Activated CD8-positive, alpha-beta memory T cell treated with anti-CD3 and anti-CD28 coated beads, Interleukin-2, amount 10 ng/mL, durations not matched to agents 7 days and 5 days (primary cell): ENCODE measurements at regions of chr14 and their contacts with region 1.

Region 1: DNA sequence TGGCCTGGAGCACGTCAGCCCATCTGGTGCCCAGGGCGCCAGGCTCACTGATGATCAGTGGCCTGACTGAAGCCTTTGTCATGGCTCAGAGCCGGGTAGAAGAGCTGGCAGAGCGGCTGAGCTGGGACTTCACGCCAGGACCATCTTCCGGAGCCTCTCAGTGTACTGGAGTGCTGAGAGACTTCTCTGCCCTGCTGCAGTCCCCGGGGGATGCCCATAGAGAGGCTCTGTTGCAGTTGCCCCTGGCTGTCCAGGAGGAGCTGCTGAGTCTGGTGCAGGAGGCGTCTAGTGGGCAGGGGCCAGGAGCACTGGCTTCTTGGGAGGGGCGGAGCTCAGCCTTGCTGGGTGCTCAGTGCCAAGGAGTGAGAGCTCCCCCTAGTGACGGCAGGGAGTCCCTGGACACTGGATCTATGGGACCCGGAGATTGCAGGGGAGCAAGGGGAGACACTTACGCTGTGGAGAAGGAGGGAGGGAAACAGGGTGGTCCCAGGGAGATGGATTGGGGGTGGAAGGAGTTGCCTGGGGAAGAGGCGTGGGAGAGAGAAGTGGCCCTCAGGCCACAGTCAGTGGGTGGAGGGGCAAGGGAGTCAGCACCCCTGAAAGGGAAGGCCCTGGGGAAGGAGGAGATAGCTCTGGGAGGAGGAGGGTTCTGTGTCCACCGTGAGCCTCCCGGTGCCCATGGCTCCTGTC is 2.0 kb downstream of the KHNYN start:
- DNase-seq: peak; percentile 95
- ATAC-seq: peak; percentile 62
- H3K4me3 Mint-ChIP-seq: peak overlapping the region; percentile 89
- H3K27ac Mint-ChIP-seq: peak overlapping the region; percentile 96
- H3K4me1 Mint-ChIP-seq: peaks cover 48% of the 10 kb centered on the region
- H3K27me3 Mint-ChIP-seq: no peaks in the 10 kb centered on the region

Region 2: GRCh38 chr14:24241829-24242443 is 189.8 kb before region 1 on chr14:
- CTCF ChIA-PET with region 1: interaction called, 30 read pairs
- DNase-seq: peak; percentile 96
- ATAC-seq: peak; percentile 83
- H3K4me3 Mint-ChIP-seq: peak overlapping the region; percentile 96
- H3K27ac Mint-ChIP-seq: peak overlapping the region; percentile 100
- H3K4me1 Mint-ChIP-seq: peaks cover 59% of the 10 kb centered on the region
- H3K27me3 Mint-ChIP-seq: no peaks in the 10 kb centered on the region

Region 3: DNA sequence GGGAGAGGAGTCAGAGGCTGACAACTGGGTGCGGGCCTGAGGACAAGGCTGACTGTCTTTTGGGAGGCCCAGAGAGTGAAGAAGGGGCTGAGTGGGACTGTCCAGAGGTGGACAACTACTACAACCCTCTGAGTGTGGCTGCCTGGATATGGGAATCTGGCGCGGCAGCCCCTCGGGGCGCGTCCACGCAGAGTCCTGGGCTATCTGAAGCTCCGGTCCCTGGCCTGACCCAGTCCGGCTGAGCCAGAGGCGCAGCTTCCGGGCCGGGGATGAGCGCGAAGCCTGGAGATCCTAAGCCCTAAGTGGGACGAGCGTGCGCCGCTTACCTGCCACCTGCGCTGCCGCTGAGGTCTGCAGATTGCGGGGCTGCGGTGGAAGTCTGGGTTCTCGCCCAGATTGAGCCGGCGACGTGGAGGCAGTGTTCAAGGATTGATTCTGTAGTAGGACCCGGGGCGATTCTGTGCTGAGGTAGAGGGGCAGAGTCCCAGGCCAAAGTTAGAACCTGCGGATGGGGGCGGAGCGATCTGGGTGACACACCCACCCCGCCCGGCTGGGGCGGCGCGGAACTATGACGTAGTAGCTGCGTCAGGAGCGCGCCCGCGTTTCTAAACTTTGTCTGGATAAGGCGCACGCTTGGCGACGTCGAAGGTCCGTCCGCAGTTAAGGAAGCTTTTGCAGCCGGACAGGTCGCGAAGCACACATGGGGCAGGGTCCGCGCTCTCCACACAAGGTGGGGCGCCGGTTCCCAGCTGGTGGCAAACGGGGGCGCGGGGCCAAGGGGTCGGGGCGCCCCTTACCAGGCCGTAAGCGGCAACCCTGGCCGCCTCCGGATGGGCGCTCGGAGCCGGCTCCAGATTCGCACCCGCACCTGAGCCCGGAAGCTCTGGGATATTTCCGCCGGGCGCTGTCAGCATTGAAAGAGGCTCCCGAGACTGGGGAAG is 132.2 kb before region 1 on chr14 and contains the starts of genes DHRS1 and NOP9:
- CTCF ChIA-PET with region 1: interaction called, 12 read pairs
- DNase-seq: peak; percentile 93
- ATAC-seq: peak; percentile 87
- H3K4me3 Mint-ChIP-seq: peak within 1 kb of the TSS; percentile 86
- H3K27ac Mint-ChIP-seq: peak within 1 kb of the TSS; percentile 89
- H3K4me1 Mint-ChIP-seq: peaks cover 55% of the 10 kb centered on the region
- H3K27me3 Mint-ChIP-seq: no peaks in the 10 kb centered on the region
- total RNA-seq, gene DHRS1: 14.2 to 26.5 TPM
- total RNA-seq, gene NOP9: 34.2 to 38.3 TPM

Region 4: GRCh38 chr14:24332268-24332993 is 99.3 kb before region 1 on chr14:
- CTCF ChIA-PET with region 1: interaction called, 854 read pairs
- DNase-seq: peak; percentile 92
- ATAC-seq: peak; percentile 66
- H3K4me3 Mint-ChIP-seq: peak overlapping the region; percentile 73
- H3K27ac Mint-ChIP-seq: peak overlapping the region; percentile 82
- H3K4me1 Mint-ChIP-seq: peaks cover 65% of the 10 kb centered on the region
- H3K27me3 Mint-ChIP-seq: peaks cover 38% of the 10 kb centered on the region

Region 5: DNA sequence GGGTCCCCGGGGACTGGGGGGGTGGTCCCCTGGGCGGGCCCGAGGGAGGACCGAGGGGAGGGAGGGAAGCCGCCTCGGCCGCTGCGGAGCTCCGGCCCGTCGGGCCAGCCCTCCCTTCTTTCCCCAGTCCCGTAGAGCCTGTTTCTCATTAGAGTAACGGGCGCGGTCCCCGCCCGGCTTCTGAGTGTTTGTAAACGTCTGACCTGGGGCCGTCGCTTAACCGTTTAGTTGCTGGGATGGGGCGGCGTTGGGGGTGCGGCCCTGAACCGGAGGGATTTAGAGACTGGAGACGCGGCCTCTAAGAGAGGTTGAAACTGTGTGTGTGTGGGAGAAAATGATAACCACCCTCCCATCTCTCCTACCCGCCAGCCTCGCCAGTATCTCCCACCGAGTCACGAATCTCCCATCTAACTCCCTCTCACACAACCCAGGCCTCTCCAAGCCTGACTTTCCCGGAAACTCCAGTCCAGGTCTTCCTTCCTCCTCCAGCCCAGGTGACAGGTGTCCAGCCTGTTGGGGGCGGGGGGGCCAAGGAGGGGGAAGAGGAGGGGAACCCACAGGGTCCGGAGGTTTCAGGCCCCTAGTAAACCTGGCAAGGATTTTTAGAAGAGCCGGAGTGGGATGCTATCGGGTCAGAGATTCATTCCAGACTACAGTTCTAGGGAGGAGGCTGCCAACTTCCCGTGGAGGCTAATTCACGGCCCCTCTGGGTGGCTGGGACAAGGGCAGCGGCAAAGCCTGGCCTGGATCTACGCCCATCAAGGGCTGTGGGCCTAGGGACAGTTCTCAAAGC is 64.8 kb before region 1 on chr14:
- CTCF ChIA-PET with region 1: interaction called, 41 read pairs
- DNase-seq: no peak
- ATAC-seq: no peak
- H3K4me3 Mint-ChIP-seq: no peak overlapping the region
- H3K27ac Mint-ChIP-seq: no peak overlapping the region
- H3K4me1 Mint-ChIP-seq: peaks cover 24% of the 10 kb centered on the region
- H3K27me3 Mint-ChIP-seq: peaks cover 61% of the 10 kb centered on the region

Region 6: GRCh38 chr14:24418492-24418873 is 13.2 kb before region 1 on chr14:
- CTCF ChIA-PET with region 1: interaction called, 18 read pairs
- DNase-seq: no peak
- ATAC-seq: no peak
- H3K4me3 Mint-ChIP-seq: no peak overlapping the region
- H3K27ac Mint-ChIP-seq: peak overlapping the region; percentile 24
- H3K4me1 Mint-ChIP-seq: no peaks in the 10 kb centered on the region
- H3K27me3 Mint-ChIP-seq: peaks cover 5% of the 10 kb centered on the region

Region 7: DNA sequence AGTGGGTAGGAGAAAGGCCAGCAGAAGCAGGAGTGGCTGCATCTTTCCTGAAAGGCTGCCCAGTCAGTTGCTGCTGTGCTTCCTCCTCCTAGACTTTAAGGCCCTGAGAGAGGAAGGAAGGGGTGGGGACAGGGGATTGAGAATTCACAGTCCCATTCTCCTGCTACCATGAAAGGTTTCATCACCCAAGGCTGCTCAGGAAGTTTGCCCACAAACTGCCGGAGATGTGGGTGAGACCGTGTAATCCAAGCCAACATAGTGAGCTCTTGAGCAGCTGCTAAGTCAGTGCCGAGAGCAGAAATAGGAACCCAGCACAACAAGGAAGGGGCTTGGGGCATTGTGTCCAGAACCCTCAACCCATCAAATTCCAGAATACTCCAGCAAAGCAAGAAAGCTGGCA is 144.5 kb after region 1 on chr14 and contains the start of gene CTSG:
- CTCF ChIA-PET with region 1: no interaction called
- DNase-seq: no peak
- ATAC-seq: no peak
- H3K4me3 Mint-ChIP-seq: no peak within 1 kb of the TSS
- H3K27ac Mint-ChIP-seq: no peak within 1 kb of the TSS
- H3K4me1 Mint-ChIP-seq: peaks cover 4% of the 10 kb centered on the region
- H3K27me3 Mint-ChIP-seq: peaks cover 21% of the 10 kb centered on the region
- total RNA-seq, gene CTSG: not detected

Region 8: DNA sequence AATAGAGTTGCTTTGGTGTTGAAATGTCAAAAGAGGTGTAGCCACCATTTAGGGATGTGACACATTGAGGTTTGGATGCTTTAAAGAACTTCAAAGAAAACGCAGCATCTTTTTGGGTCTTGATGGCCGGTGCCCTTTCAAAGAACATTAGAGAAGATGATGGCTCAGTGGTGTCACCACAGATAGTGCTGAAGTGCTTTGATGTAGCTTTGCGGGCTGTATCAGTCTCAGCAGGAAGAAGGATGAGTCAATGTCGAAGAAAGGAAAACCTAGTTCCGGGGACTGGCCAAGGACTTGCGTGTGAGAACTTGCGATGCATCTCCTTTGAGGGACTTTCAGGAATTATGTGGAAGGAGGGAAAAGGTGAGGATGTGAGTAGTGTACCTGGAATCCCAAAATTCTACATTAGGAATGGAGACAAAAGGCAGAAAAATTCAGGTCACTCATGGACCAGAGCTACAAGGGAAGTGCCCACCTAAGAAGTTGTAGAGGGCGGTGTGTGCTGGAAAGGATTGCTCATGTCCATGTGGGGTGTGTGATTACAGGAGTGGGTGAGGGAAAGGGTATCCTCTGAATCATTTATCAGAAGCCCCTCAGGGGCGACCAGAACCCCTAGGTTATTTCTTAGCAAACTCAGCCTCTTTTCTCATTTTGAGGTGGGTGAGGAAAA is 242.0 kb after region 1 on chr14:
- CTCF ChIA-PET with region 1: interaction called, 10 read pairs
- DNase-seq: peak; percentile 90
- ATAC-seq: peak; percentile 77
- H3K4me3 Mint-ChIP-seq: peak overlapping the region; percentile 74
- H3K27ac Mint-ChIP-seq: peak overlapping the region; percentile 100
- H3K4me1 Mint-ChIP-seq: peaks cover 89% of the 10 kb centered on the region
- H3K27me3 Mint-ChIP-seq: no peaks in the 10 kb centered on the region

Region 9: DNA sequence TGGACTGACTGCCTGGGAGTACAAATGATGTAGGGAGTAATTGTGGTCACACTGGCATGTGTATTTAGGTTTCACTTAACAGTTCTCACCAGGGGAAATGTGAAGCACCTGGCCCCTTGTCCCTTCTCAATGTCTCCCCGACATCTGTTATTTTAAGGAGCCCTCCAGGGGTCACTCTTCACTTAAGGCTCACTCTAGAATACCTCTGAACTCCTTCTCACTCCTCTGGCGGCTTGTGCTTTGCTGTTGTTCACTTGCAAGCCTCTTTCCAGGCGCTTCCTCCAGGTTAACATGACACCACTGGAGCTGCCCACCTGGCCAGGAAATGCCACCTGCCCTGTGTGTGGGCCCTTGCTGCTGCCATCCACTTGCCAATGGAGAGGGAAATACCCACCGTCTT is 258.8 kb after region 1 on chr14:
- CTCF ChIA-PET with region 1: no interaction called
- DNase-seq: peak; percentile 57
- ATAC-seq: peak; percentile 16
- H3K4me3 Mint-ChIP-seq: no peak overlapping the region
- H3K27ac Mint-ChIP-seq: no peak overlapping the region
- H3K4me1 Mint-ChIP-seq: peaks cover 37% of the 10 kb centered on the region
- H3K27me3 Mint-ChIP-seq: no peaks in the 10 kb centered on the region